IMR-90 (cell line): ENCODE measurements at regions of chr11 and their contacts with region 1.

Region 1: GRCh38 chr11:2532704-2533586 is 88.1 kb downstream of the KCNQ1 start:
- DNase-seq: peak; percentile 85
- ATAC-seq: peak; percentile 70
- H3K4me3 ChIP-seq: no peak overlapping the region
- H3K27ac ChIP-seq: peak overlapping the region; percentile 78; the same call in 1 of the 2 replicates
- H3K4me1 ChIP-seq: peaks cover 14% of the 10 kb centered on the region
- H3K27me3 ChIP-seq: peaks cover 8% of the 10 kb centered on the region; the same call in 1 of the 2 replicates
- CTCF ChIP-seq: peak; percentile 99
- POLR2A ChIP-seq: peak; percentile 59; the same call in 1 of the 2 replicates
- RAD21 ChIP-seq: peak; percentile 97

Region 2: DNA sequence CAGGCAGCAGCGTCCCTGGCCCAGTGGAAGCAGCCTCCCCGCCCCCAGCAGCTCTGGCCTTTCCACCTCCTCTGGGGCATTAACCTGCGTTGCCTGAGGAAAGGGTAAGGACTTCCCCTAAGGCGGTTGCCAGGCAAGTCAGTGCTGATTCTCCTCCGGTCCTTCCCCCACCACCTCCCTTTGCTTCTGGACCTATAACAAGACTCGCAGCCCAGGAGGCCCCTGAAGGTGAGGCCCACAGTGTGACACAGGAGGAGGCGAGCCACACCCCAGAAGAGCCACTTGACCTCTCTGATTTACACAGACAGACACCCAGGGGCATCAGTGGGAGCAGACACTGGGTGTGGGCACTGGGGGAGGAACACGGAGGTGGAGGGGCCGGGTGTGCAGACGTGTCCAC is 298.0 kb before region 1 on chr11:
- CTCF ChIA-PET with region 1: no interaction called
- POLR2A ChIA-PET with region 1: no interaction called
- dilution Hi-C with region 1: no loop called
- in situ Hi-C with region 1: no loop called
- intact Hi-C with region 1: no loop called
- DNase-seq: no peak
- ATAC-seq: no peak
- H3K4me3 ChIP-seq: no peak overlapping the region
- H3K27ac ChIP-seq: no peak overlapping the region
- H3K4me1 ChIP-seq: no peaks in the 10 kb centered on the region
- H3K27me3 ChIP-seq: peaks cover 26% of the 10 kb centered on the region
- CTCF ChIP-seq: no peak
- POLR2A ChIP-seq: no peak
- RAD21 ChIP-seq: no peak

Region 3: DNA sequence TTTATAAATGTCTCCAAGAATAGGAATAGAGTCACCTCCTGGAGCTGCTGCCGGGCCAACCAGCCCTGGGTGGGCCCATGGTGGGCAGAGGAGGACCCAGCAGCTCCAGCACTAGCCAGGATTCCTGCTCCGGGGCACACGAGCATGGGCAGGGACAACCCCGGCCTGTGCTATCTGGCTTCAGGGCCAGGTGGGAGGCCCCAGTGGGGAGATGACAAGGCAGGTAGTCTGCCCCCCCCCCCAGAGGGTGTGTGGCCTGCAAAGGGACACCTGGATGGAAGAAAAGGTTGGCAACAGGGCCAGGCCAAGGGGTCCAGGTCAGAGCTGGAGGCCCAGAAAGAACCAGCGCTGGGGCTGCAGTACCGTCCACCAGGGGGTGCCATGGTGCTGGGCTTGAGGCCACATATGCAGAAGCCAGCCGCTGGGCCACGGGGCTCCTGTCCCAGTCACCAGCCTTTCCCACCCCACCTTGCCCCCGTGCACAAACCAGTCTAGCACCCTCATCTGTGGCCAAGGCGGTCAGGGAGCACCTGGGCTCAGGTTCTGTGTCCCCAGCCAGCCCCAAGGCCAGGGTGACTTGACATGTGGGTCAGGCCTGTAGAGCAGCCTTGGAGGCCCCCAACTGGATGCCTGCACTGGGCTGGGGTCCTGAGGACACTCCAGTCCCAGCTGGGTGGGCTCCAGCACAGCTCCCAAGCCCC is 227.7 kb before region 1 on chr11:
- CTCF ChIA-PET with region 1: interaction called, 3 read pairs
- POLR2A ChIA-PET with region 1: no interaction called
- dilution Hi-C with region 1: no loop called
- in situ Hi-C with region 1: no loop called
- intact Hi-C with region 1: loop called (anchors 2 kb)
- DNase-seq: peak; percentile 58
- ATAC-seq: peak; percentile 82
- H3K4me3 ChIP-seq: no peak overlapping the region
- H3K27ac ChIP-seq: peak overlapping the region; percentile 98
- H3K4me1 ChIP-seq: peaks cover 11% of the 10 kb centered on the region
- H3K27me3 ChIP-seq: no peaks in the 10 kb centered on the region
- CTCF ChIP-seq: peak; percentile 88
- POLR2A ChIP-seq: no peak
- RAD21 ChIP-seq: peak; percentile 94

Region 4: DNA sequence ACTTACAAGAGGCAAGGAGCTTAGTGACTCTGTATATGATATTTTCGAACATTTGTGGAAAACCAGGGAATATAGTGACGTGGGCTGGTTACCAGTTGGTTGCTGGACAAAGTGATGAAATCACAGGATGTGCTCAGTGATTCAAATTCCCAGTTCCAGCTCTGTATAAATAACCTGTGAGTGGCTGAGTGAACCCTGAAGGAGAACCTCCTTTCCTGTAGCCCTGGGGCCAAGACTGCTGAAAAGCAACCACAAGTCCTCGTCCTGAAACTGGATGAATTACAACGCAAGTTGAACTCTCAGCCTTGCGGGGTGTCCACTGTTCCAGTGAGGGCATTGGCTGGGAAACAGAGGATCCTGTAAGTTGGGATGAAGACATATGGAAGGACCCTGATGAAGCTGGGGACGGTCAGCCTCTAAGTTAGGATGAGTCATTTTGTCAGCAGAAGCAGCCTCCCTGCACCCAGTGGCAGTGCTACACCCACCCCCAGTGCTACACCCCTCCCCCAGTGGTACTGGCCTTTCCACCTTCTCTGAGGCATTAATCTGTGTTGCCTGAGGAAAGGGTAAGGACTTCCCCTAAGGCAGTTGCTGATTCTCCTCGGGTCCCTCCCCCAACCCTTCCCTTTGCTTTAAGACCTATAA is 177.8 kb before region 1 on chr11:
- CTCF ChIA-PET with region 1: no interaction called
- POLR2A ChIA-PET with region 1: no interaction called
- dilution Hi-C with region 1: no loop called
- in situ Hi-C with region 1: no loop called
- intact Hi-C with region 1: no loop called
- DNase-seq: peak; percentile 80
- ATAC-seq: peak; percentile 91
- H3K4me3 ChIP-seq: no peak overlapping the region
- H3K27ac ChIP-seq: peak overlapping the region; percentile 26
- H3K4me1 ChIP-seq: peaks cover 7% of the 10 kb centered on the region
- H3K27me3 ChIP-seq: no peaks in the 10 kb centered on the region; the same call in 1 of the 2 replicates
- CTCF ChIP-seq: no peak
- POLR2A ChIP-seq: no peak
- RAD21 ChIP-seq: no peak

Region 5: GRCh38 chr11:2699531-2700414 is 166.8 kb after region 1 on chr11 and contains the start of gene KCNQ1OT1:
- CTCF ChIA-PET with region 1: no interaction called
- POLR2A ChIA-PET with region 1: no interaction called
- dilution Hi-C with region 1: no loop called
- in situ Hi-C with region 1: no loop called
- intact Hi-C with region 1: loop called (anchors 2 kb)
- DNase-seq: peak; percentile 92
- ATAC-seq: peak; percentile 95
- H3K4me3 ChIP-seq: peak within 1 kb of the TSS; percentile 71
- H3K27ac ChIP-seq: peak within 1 kb of the TSS; percentile 83
- H3K4me1 ChIP-seq: peaks cover 5% of the 10 kb centered on the region
- H3K27me3 ChIP-seq: peaks cover 4% of the 10 kb centered on the region; the same call in 1 of the 2 replicates
- CTCF ChIP-seq: no peak
- POLR2A ChIP-seq: peak; percentile 99
- RAD21 ChIP-seq: no peak
- total RNA-seq, gene KCNQ1OT1: 1.9 and 2.0 TPM in 2 replicates

Region 6: GRCh38 chr11:2778630-2779498 is 245.9 kb after region 1 on chr11:
- CTCF ChIA-PET with region 1: no interaction called
- POLR2A ChIA-PET with region 1: no interaction called
- dilution Hi-C with region 1: no loop called
- in situ Hi-C with region 1: no loop called
- intact Hi-C with region 1: no loop called
- DNase-seq: peak; percentile 63
- ATAC-seq: peak; percentile 88
- H3K4me3 ChIP-seq: no peak overlapping the region
- H3K27ac ChIP-seq: no peak overlapping the region
- H3K4me1 ChIP-seq: peaks cover 22% of the 10 kb centered on the region
- H3K27me3 ChIP-seq: peaks cover 3% of the 10 kb centered on the region
- CTCF ChIP-seq: no peak
- POLR2A ChIP-seq: no peak
- RAD21 ChIP-seq: no peak

Region 7: GRCh38 chr11:2885676-2886081 is 352.7 kb after region 1 on chr11 and contains the start of gene CDKN1C:
- CTCF ChIA-PET with region 1: interaction called, 116 read pairs
- POLR2A ChIA-PET with region 1: interaction called, 4 read pairs
- dilution Hi-C with region 1: no loop called
- in situ Hi-C with region 1: loop called (anchors 5 kb)
- intact Hi-C with region 1: loop called (anchors 1 kb)
- DNase-seq: peak; percentile 69
- ATAC-seq: peak; percentile 79
- H3K4me3 ChIP-seq: peak within 1 kb of the TSS; percentile 86
- H3K27ac ChIP-seq: peak within 1 kb of the TSS; percentile 44
- H3K4me1 ChIP-seq: peaks cover 13% of the 10 kb centered on the region
- H3K27me3 ChIP-seq: no peaks in the 10 kb centered on the region; the same call in 1 of the 2 replicates
- CTCF ChIP-seq: no peak
- POLR2A ChIP-seq: peak; percentile 79
- RAD21 ChIP-seq: no peak
- total RNA-seq, gene CDKN1C: 1.6 and 2.2 TPM in 2 replicates

Region 8: GRCh38 chr11:2992234-2992996 is 459.5 kb after region 1 on chr11 and contains the start of gene NAP1L4:
- CTCF ChIA-PET with region 1: interaction called, 4 read pairs
- POLR2A ChIA-PET with region 1: no interaction called
- dilution Hi-C with region 1: no loop called
- in situ Hi-C with region 1: no loop called
- intact Hi-C with region 1: loop called (anchors 5 kb)
- DNase-seq: peak; percentile 95
- ATAC-seq: peak; percentile 91
- H3K4me3 ChIP-seq: peak within 1 kb of the TSS; percentile 92
- H3K27ac ChIP-seq: peak within 1 kb of the TSS; percentile 92
- H3K4me1 ChIP-seq: peaks cover 10% of the 10 kb centered on the region
- H3K27me3 ChIP-seq: no peaks in the 10 kb centered on the region
- CTCF ChIP-seq: no peak
- POLR2A ChIP-seq: peak; percentile 73
- RAD21 ChIP-seq: no peak
- total RNA-seq, gene NAP1L4: 71.5 and 80.8 TPM in 2 replicates